ENCODE measurements at regions of chr12 and their contacts with region 1.

Region 1: GRCh38 chr12:3073438-3074250 is 3.5 kb upstream of the TSPAN9 start:
- DNase-seq: peak; percentile 69
- H3K4me3 ChIP-seq: no peak overlapping the region
- H3K27ac ChIP-seq: no peak overlapping the region
- H3K27me3 ChIP-seq: peaks cover 2% of the 10 kb centered on the region
- CTCF ChIP-seq: peak; percentile 99

Region 2: GRCh38 chr12:3060778-3061458 is 12.7 kb before region 1 on chr12:
- CTCF ChIA-PET with region 1: interaction called, 88 read pairs
- POLR2A ChIA-PET with region 1: no interaction called
- DNase-seq: no peak
- H3K4me3 ChIP-seq: no peak overlapping the region
- H3K27ac ChIP-seq: no peak overlapping the region
- H3K27me3 ChIP-seq: peaks cover 22% of the 10 kb centered on the region
- CTCF ChIP-seq: no peak

Region 3: GRCh38 chr12:3091382-3092241 is 18.0 kb after region 1 on chr12:
- CTCF ChIA-PET with region 1: interaction called, 14 read pairs
- POLR2A ChIA-PET with region 1: no interaction called
- DNase-seq: no peak
- H3K4me3 ChIP-seq: no peak overlapping the region
- H3K27ac ChIP-seq: no peak overlapping the region
- H3K27me3 ChIP-seq: no peaks in the 10 kb centered on the region
- CTCF ChIP-seq: no peak

Region 4: GRCh38 chr12:3122835-3123678 is 49.4 kb after region 1 on chr12:
- CTCF ChIA-PET with region 1: interaction called, 19 read pairs
- POLR2A ChIA-PET with region 1: no interaction called
- DNase-seq: no peak
- H3K4me3 ChIP-seq: no peak overlapping the region
- H3K27ac ChIP-seq: peak overlapping the region; percentile 73
- H3K27me3 ChIP-seq: no peaks in the 10 kb centered on the region
- CTCF ChIP-seq: peak; percentile 33

Region 5: DNA sequence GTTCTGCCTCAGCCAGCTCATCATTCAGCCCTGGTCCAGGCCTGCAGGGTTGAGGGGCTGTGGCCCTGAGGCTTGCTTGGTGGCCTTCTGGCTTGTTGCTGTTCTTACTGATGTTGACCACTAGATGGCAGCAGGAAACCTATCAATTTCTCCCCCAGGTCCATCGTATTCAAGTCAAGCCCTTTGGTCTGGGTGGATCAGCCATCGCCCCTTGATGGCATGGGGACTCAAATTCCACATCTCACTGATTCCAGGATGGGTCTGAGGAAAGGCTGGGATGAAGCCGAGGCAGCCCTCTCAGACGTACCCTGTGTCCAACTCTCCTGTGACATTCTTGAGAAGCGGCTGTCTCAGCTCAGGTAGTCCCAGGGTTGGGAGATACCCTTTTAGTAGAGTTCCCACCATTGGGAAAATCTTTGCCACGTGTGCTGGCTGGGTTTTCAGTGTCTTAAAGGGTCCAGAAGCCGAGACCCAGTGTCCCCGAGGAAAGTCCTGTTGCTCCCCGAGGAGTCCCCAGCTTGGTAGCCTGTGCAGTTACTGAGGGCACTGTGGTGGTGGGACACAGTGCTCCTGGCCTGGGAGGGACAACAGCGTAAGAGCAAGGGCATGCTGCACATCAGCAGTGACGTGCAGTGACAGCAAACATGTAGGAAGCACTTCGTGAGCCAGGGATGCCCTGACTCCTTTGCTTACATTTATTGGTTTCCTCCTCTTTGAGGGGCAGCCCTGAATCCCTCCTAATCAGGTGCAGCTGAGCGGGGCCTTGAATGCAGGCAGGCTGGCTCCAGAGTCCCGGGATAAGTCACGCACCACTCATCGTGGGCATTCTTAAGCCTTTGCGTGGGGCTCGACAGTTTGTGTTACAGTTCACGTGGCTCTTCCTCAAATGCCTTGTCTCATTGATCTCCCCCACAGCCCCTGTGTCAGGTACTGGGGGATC is 62.1 kb after region 1 on chr12:
- CTCF ChIA-PET with region 1: interaction called, 21 read pairs
- POLR2A ChIA-PET with region 1: interaction called, 3 read pairs
- DNase-seq: peak; percentile 66
- H3K4me3 ChIP-seq: no peak overlapping the region
- H3K27ac ChIP-seq: no peak overlapping the region
- H3K27me3 ChIP-seq: no peaks in the 10 kb centered on the region
- CTCF ChIP-seq: peak; percentile 78

Region 6: DNA sequence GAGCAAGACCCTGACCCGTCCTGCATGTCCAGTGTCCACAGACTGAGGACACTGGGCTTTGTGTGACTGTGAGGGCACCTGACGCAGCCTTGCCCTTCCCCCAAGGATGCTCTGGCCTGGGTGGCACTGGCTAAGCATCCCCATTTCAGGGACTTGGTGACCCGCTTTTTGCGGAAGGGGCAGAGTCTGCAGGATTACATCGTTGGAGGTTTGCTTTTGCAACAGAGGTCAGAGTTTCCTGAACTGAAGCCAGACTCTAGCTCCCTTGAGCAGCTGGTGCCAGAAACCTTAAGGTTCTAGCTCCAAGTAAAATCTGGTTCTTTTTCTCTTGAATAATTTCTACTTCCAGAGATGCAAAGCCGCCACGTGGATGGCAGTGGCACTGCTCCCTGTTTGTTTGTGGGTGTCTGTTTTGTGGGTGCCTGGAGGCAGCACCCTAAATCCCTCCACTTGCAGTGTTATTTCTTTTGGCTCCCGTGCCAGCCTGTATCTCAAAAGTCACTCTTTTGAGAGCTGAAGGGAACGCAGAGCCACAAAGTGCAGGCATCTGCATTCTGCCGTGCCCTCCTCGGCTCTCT is 188.2 kb after region 1 on chr12:
- CTCF ChIA-PET with region 1: interaction called, 14 read pairs
- POLR2A ChIA-PET with region 1: no interaction called
- DNase-seq: no peak
- H3K4me3 ChIP-seq: no peak overlapping the region
- H3K27ac ChIP-seq: peak overlapping the region; percentile 21
- H3K27me3 ChIP-seq: no peaks in the 10 kb centered on the region
- CTCF ChIP-seq: peak; percentile 47

Measured in AG04450 (cell line).